Posterior vena cava (tissue), 2 donors: ENCODE measurements at regions of chr9 and their contacts with region 1.

Region 1: GRCh38 chr9:87324613-87325194 is 173.0 kb upstream of the DAPK1 start:
- DNase-seq: no peak

Region 2: GRCh38 chr9:86434039-86434726 is 890.5 kb before region 1 on chr9:
- intact Hi-C with region 1: loop called (anchors 10 kb)
- DNase-seq: peak; percentile 80

Region 3: DNA sequence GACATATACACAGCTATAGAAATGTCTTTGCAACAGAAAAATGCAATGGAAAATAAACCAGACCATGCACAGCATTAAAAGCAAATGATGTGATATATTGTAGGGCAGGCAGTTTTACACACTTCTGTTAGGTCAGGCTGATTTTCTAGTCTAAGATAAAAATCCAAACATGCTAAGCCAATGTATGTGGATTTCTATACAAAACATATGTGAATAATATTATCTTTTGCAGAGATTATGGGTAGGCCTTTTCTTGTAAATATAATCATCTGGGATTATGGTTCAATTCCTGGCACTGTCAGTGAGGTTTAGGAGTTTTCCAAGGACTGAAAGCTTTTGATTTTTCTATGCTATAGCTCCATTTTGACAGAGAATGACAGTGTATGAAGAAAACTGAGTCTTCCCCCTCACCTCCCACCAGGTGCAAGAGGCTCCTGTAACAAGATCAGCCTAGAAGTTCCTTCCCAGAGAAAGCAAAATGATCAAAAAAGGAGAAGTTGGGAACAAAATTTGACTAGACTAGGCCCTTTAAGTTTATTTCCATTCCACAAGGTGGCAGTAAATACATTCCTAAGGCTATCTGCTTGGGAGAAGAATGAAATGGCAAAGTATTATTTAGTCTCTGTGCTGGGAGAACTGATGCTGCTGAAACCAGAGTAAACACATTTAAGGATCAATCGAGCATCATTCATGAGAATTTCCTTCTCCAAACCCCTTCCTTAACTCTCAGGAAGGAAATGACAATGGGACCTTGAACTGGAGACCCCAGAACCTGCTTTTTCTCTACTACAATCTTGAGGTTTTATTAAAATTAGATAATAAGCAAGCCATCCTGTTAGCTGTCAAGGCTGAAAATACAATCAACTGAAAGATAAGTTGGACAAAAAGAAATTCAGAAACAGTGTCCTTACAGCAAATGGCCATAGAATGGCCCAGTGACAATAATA is 837.5 kb before region 1 on chr9:
- intact Hi-C with region 1: loop called (anchors 5 kb)
- DNase-seq: no peak

Region 4: GRCh38 chr9:86902991-86903733 is 421.5 kb before region 1 on chr9:
- intact Hi-C with region 1: no loop called
- DNase-seq: no peak

Region 5: DNA sequence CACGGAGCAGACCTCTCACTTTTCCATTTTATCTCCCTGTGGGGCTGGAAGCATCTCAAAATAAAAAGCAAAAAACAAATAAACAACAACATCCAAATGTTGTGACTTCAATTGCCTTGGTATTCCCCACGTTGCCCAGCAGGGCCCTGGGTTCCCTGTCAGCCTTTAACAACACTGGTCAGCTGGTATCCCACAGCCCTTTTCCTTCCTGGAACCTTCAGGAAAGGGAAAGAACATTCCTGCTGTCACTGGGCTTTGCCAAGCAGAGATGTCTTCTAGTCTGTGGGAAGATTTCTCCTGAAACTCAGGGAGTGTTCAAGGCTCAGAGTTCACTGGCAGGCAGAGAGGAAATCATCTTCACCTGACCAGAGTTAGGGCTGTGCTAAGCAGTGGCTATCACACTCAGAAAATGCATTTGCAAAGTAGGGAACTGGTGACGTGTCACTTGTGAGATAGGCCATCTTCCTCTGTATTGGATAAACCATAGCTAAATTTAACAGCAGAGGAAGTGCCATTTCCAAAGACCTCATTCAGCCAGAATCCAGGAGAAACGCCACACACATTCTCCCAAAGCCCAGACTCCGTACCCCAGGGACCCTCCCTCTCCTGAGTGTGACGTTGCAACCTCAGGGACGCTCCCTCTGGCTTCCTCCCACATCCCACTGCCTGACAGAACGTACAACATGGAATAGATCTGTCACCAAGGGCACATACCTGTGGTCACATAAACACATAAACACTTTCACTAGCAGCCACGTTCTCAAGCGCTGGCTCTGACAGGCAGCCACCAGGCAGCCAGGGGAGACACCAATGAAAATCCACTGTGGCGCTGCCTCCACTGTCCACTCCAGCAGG is 101.1 kb before region 1 on chr9:
- intact Hi-C with region 1: no loop called
- DNase-seq: no peak

Region 6: GRCh38 chr9:87606841-87607521 is 282.3 kb after region 1 on chr9:
- intact Hi-C with region 1: no loop called
- DNase-seq: no peak